Gastrocnemius medialis (tissue), 4 donors: ENCODE measurements at regions of chr14 and their contacts with region 1.

Region 1: GRCh38 chr14:69129264-69129880 is 23.5 kb downstream of the DCAF5 start:
- DNase-seq: peak; percentile 57 to 67
- ATAC-seq: peak; percentile 81 to 86
- H3K4me3 ChIP-seq: no peak overlapping the region
- H3K27ac ChIP-seq: peak overlapping the region; percentile 58 to 79 (median 61)
- H3K4me1 ChIP-seq: peaks cover 63 to 69% of the 10 kb centered on the region in 2 donors
- H3K27me3 ChIP-seq: no peaks in the 10 kb centered on the region
- CTCF ChIP-seq: peak; percentile 79 to 93 (median 87)
- POLR2A ChIP-seq: no peak

Region 2: GRCh38 chr14:69214393-69214792 is 85.0 kb after region 1 on chr14:
- in situ Hi-C with region 1: no loop called
- intact Hi-C with region 1: loop called (anchors 2 kb)
- DNase-seq: peak; percentile 10 to 41
- ATAC-seq: peak; percentile 100
- H3K4me3 ChIP-seq: no peak overlapping the region
- H3K27ac ChIP-seq: peak overlapping the region; percentile 67 to 83 (median 72)
- H3K4me1 ChIP-seq: peaks cover 15 to 25% of the 10 kb centered on the region in 2 donors
- H3K27me3 ChIP-seq: no peaks in the 10 kb centered on the region
- CTCF ChIP-seq: no peak
- POLR2A ChIP-seq: no peak